Mammary epithelial cell (primary cell): ENCODE measurements at regions of chr11 and their contacts with region 1.

Region 1: DNA sequence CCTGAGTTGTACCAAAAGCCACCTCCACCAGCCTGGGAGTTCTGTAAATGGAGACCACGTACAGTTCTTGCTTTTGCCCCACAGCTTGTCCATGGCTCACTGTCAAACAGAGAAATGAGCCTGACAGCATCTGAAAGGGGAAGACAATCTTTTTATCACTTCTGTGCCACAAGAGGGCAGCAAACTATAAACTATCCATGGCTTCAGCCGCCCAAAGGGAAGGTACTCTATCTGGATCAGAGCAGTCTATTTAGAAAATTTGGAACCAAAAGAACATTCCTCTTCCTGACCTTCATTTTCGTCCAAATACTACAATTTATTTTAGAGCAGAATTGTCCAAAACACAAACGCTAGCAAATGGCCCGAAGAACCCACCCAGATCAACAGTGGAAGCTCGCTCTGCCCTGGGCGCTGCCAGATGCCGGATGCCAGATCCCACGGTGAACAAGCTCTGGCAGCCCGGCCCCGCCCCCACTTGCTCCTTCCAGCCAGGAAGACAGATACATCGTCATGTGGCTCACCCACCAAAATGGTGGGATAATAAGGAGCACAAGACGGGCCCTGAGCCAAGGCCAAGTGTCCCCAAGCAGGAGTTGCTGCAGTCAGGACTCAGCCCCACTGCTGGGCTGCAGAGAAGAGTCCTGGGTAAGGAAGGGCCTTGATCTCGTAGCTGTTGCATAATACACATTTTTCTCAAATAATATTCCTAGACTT is 23.9 kb upstream of the SCGB1A1 start:
- DNase-seq: peak; percentile 75
- H3K4me3 ChIP-seq: peak overlapping the region; percentile 42 to 47 (median 42)
- H3K27ac ChIP-seq: no peak overlapping the region
- H3K4me1 ChIP-seq: peaks cover 9% of the 10 kb centered on the region
- H3K27me3 ChIP-seq: no peaks in the 10 kb centered on the region
- CTCF ChIP-seq: peak; percentile 52 to 62

Region 2: GRCh38 chr11:62353844-62354243 is 41.1 kb before region 1 on chr11:
- CTCF ChIA-PET with region 1: no interaction called
- dilution Hi-C with region 1: no loop called
- in situ Hi-C with region 1: no loop called
- intact Hi-C with region 1: no loop called
- DNase-seq: no peak
- H3K4me3 ChIP-seq: no peak overlapping the region
- H3K27ac ChIP-seq: no peak overlapping the region
- H3K4me1 ChIP-seq: no peaks in the 10 kb centered on the region
- H3K27me3 ChIP-seq: no peaks in the 10 kb centered on the region
- CTCF ChIP-seq: no peak

Region 3: GRCh38 chr11:62427630-62428233 is 32.8 kb after region 1 on chr11:
- CTCF ChIA-PET with region 1: no interaction called
- dilution Hi-C with region 1: no loop called
- in situ Hi-C with region 1: no loop called
- intact Hi-C with region 1: loop called (anchors 1 kb)
- DNase-seq: no peak
- H3K4me3 ChIP-seq: no peak overlapping the region
- H3K27ac ChIP-seq: no peak overlapping the region
- H3K4me1 ChIP-seq: peaks cover 4% of the 10 kb centered on the region
- H3K27me3 ChIP-seq: peaks cover 3% of the 10 kb centered on the region
- CTCF ChIP-seq: no peak

Region 4: DNA sequence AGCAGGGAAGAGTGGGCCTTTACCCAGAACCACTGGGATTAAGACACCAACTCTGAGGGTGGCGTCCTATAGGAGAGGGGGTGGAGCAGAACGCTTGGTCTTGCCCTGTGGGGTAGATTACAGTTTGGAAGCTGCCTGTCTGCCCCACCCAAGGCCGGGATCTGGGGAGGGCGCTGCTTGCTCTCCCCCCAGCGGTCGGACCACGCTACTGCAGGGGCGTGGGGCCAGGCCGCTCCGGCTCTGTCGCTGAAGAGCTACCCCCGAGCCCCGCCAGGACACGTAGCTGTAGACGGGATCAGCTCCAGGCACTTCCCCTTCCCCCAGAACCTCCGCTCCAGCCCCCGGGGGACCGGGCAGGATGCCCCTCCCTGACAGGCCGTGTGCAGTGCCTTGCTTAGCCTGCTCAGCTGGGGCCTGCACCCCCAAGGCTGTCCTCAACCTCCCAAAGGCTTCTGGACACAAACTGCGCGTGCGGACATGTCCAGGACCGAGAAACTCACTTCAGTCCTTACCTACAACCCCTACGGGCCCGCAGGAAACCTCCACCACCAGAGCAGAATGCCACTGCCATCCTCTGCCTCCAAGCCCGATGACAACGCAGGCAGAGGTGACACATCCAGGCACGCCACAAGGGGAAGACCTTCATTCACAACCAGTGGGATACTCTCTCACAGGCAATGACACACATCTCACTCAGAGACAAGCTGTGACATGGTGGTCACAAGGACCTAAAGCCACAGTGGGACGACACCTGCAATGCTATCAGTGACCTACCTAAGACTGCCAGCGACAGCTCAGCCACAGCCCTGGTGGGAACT is 148.0 kb after region 1 on chr11:
- CTCF ChIA-PET with region 1: interaction called, 8 read pairs
- dilution Hi-C with region 1: no loop called
- in situ Hi-C with region 1: no loop called
- intact Hi-C with region 1: loop called (anchors 1 kb)
- DNase-seq: peak; percentile 78
- H3K4me3 ChIP-seq: peak overlapping the region; percentile 82 to 99 (median 91)
- H3K27ac ChIP-seq: peak overlapping the region; percentile 86
- H3K4me1 ChIP-seq: peaks cover 59% of the 10 kb centered on the region
- H3K27me3 ChIP-seq: no peaks in the 10 kb centered on the region
- CTCF ChIP-seq: peak; percentile 78 to 98

Region 5: GRCh38 chr11:62627714-62628113 is 232.7 kb after region 1 on chr11:
- CTCF ChIA-PET with region 1: no interaction called
- dilution Hi-C with region 1: loop called (anchors 5 kb)
- in situ Hi-C with region 1: no loop called
- intact Hi-C with region 1: no loop called
- DNase-seq: no peak
- H3K4me3 ChIP-seq: no peak overlapping the region
- H3K27ac ChIP-seq: no peak overlapping the region
- H3K4me1 ChIP-seq: no peaks in the 10 kb centered on the region
- H3K27me3 ChIP-seq: no peaks in the 10 kb centered on the region
- CTCF ChIP-seq: peak in 1 of 2 donors; percentile 23

Region 6: GRCh38 chr11:62787005-62787759 is 392.2 kb after region 1 on chr11 and contains the start of gene TMEM179B:
- CTCF ChIA-PET with region 1: no interaction called
- dilution Hi-C with region 1: no loop called
- in situ Hi-C with region 1: no loop called
- intact Hi-C with region 1: loop called (anchors 5 kb)
- DNase-seq: peak; percentile 98
- H3K4me3 ChIP-seq: peak within 1 kb of the TSS; percentile 43 to 95 (median 67)
- H3K27ac ChIP-seq: peak within 1 kb of the TSS; percentile 70
- H3K4me1 ChIP-seq: peaks cover 21% of the 10 kb centered on the region
- H3K27me3 ChIP-seq: no peaks in the 10 kb centered on the region
- CTCF ChIP-seq: peak; percentile 52 to 71
- total RNA-seq, gene TMEM179B: 20.5 to 26.9 TPM

Region 7: DNA sequence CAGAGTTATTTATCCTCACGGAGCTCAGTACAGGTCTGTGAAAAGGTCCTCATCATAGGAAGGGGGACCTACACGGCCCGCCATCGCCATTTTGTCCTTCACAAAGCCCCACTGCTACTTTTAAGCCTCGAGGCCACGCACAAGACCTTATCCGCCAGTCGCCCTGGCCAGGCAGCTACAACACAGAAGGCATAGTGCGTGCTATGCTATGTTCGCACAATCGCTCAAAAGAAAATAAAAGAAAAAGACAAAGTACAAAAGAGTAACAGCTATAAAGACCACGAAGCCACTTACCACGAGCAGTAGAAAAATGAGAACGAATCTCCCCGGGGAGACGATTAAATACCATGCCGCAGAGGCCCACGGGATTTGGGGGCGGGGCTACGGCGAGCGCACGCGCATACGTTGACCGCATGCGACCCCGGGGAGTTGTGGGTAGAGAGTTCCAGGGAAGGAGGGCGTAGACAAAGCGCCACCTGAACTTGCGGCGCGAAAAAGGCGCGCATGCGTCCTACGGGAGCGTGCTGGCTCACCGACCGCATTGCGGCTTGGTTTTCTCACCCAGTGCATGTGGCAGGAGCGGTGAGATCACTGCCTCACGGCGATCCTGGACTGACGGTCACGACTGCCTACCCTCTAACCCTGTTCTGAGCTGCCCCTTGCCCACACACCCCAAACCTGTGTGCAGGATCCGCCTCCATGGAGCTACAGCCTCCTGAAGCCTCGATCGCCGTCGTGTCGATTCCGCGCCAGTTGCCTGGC is 460.8 kb after region 1 on chr11:
- CTCF ChIA-PET with region 1: no interaction called
- dilution Hi-C with region 1: loop called (anchors 25 kb)
- in situ Hi-C with region 1: loop called in 1 of 2 experiments (anchors 25 kb)
- intact Hi-C with region 1: loop called (anchors 10 kb)
- DNase-seq: peak; percentile 98
- H3K4me3 ChIP-seq: peak overlapping the region; percentile 74 to 86 (median 84)
- H3K27ac ChIP-seq: peak overlapping the region; percentile 77
- H3K4me1 ChIP-seq: peaks cover 19% of the 10 kb centered on the region
- H3K27me3 ChIP-seq: no peaks in the 10 kb centered on the region
- CTCF ChIP-seq: no peak